ENCODE measurements at regions of chr6 and their contacts with region 1.

Region 1: GRCh38 chr6:110039364-110039980 is 61.4 kb downstream of the GPR6 start:
- DNase-seq: peak; percentile 79
- CTCF ChIP-seq: peak; percentile 89

Region 2: GRCh38 chr6:109595998-109596397 is 443.5 kb before region 1 on chr6:
- CTCF ChIA-PET with region 1: interaction called, 16 read pairs
- POLR2A ChIA-PET with region 1: no interaction called
- DNase-seq: peak; percentile 31
- CTCF ChIP-seq: peak; percentile 45

Region 3: DNA sequence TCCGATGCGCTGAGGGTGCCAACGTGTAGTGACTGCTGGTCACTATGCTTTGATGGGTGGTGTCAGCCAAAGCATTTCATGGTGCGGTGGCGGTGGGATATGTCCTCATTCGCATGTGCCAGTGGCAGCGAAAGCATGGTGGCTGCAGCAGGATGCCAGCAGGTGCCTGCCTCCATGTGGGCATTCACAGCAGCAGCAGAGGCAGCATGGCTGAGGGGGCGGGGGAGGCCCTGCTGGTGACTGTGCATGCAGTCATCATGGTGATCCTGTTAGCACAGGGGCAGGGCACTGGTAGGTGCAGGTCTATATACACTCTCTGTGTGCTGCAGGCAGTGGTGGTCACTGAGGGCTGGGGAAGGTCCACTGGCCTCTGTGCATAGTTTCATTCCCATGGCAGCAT is 326.4 kb before region 1 on chr6:
- CTCF ChIA-PET with region 1: interaction called, 29 read pairs
- POLR2A ChIA-PET with region 1: no interaction called
- DNase-seq: no peak
- CTCF ChIP-seq: no peak

Region 4: DNA sequence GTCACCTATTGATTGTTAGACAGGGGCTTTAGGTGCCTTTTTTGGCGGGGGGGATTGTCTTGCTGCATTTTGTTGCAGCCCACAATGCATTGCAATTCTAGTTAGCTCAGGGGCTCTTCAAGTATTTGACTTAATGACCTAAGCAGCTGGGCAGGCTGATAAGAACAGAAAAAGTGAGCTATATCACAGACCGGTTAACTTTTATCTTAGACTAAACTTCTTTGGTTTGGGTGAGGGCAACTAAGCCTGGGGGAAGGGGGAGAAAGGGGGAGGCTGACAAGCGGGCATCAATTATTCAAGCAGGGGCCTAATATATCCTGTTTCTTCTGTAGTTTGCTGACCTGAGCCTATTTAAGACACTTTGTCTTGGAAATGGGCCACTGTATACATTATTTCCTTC is 127.4 kb before region 1 on chr6:
- CTCF ChIA-PET with region 1: no interaction called
- POLR2A ChIA-PET with region 1: no interaction called
- DNase-seq: no peak
- CTCF ChIP-seq: no peak

Region 5: DNA sequence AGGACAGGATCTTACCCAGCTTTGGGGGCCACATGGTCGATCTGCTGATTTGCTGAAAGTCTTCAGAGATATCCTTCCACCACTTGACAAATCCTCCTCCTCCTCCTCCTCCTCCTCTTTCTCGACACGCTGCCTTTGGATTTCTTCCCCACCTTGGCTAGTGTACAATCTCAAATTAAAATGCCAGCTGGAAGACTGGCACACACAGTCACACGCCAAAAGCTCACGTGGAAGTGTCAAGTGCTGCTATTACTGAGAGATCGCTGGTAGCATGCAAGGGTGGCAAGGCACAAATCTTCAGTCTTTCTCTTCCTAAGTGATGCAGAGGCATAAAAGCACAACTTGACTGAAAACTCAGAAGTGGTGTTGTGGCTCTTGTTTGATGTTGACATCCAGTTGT is 26.1 kb before region 1 on chr6:
- CTCF ChIA-PET with region 1: interaction called, 24 read pairs
- POLR2A ChIA-PET with region 1: no interaction called
- DNase-seq: no peak
- CTCF ChIP-seq: no peak

Region 6: DNA sequence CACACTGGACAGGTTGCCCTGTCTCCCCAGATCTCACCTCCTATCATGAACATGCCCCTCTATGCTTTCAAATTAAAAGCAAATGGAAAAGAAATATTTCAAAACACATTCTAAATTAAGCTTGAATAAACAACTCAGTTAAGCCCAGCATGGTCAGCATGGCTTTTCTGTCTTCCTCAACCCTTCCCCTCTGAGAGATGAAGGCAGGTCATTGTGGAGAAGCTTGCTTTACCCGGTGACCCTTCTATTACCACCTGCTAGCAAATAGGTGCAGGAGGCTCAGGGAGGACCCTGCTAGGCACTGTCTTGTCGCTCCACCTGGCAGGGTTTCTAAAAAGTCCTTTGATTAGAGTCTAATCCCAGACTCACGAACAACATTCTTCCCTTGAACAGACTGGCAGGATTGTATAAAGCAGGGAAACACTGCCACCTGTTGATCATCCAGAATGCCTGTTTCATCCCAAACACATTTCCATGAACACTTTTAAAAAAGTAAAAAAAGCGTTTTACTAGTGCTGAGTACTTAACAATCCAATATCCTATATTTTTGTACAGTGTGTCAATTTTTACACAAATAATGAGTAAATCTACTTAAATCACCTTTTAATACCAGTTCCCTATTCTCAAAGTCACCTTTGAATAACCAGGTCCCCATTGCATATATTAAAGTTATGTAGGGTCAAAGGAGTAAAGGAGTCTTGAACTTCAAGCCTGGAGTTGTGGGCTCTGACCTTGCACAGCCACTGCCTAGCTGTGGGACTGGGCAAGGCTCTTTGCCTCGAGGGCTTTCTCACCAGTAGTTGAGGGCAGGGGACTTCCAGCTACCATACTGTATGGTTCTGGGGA is 14.1 kb after region 1 on chr6:
- CTCF ChIA-PET with region 1: interaction called, 113 read pairs
- POLR2A ChIA-PET with region 1: no interaction called
- DNase-seq: peak; percentile 50
- CTCF ChIP-seq: peak; percentile 70